Activated T-helper 1 cell treated with anti-CD3 and anti-CD28 coated beads, Interleukin-12 subunit alpha, Interleukin-12 subunit beta, Interleukin-2, Interleukin-4 antibody, amounts not matched to agents 30 ng/mL and 10 ng/mL and 1 ng/mL, durations not matched to agents 14 hours and 24 hours and 36 hours (primary cell): ENCODE measurements at regions of chr3 and their contacts with region 1.

Region 1: DNA sequence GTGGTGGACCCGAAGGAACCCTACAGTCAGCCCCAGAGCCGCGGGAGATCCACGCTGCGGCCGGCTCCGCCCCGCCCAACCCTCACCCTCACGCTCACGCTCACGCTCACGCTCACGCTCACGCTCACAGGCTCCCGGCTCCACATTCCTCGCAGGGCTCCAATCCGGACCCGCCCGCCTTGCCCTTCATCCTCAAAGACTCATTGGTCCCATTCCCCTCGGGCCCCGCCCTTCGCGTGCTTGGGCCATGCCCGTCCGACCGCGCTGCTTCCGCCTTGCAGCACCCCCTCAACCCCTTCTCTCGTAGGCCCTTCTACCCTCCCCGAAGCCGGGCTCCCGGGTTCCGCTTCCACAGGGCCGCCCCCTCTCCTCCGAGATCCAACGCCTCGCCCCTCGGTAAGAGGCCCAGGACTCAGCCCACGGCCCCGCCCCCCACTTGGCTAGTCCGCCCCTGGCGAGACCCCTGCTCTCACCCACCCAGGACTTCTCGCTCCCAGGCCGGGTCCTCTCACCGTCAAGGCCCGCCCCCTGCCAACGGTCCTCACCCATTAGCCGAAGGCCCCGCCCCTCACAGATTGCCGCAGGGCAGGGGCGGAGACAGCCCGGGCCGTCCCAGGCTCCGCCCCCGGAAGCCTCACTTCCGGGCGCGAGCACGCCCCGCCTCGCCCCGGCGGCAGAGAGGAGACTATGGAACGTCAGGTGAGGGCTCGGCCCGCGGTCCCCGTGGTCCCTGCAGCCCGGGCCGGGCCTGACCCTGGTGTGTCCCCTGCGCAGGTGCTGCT is at the start of gene APEH:
- DNase-seq: peak; percentile 96
- H3K4me3 Mint-ChIP-seq: peak within 1 kb of the TSS; percentile 87
- H3K27ac Mint-ChIP-seq: peak within 1 kb of the TSS; percentile 96
- H3K4me1 Mint-ChIP-seq: peaks cover 19% of the 10 kb centered on the region
- H3K27me3 Mint-ChIP-seq: no peaks in the 10 kb centered on the region
- total RNA-seq, gene APEH: 113 and 115 TPM in 2 replicates

Region 2: GRCh38 chr3:49469936-49470713 is 203.8 kb before region 1 on chr3 and contains the start of gene DAG1:
- intact Hi-C with region 1: loop called (anchors 1 kb)
- DNase-seq: peak; percentile 96
- H3K4me3 Mint-ChIP-seq: peak within 1 kb of the TSS; percentile 92
- H3K27ac Mint-ChIP-seq: peak within 1 kb of the TSS; percentile 88
- H3K4me1 Mint-ChIP-seq: peaks cover 23% of the 10 kb centered on the region
- H3K27me3 Mint-ChIP-seq: no peaks in the 10 kb centered on the region
- total RNA-seq, gene DAG1: 20.5 and 23.7 TPM in 2 replicates

Region 3: DNA sequence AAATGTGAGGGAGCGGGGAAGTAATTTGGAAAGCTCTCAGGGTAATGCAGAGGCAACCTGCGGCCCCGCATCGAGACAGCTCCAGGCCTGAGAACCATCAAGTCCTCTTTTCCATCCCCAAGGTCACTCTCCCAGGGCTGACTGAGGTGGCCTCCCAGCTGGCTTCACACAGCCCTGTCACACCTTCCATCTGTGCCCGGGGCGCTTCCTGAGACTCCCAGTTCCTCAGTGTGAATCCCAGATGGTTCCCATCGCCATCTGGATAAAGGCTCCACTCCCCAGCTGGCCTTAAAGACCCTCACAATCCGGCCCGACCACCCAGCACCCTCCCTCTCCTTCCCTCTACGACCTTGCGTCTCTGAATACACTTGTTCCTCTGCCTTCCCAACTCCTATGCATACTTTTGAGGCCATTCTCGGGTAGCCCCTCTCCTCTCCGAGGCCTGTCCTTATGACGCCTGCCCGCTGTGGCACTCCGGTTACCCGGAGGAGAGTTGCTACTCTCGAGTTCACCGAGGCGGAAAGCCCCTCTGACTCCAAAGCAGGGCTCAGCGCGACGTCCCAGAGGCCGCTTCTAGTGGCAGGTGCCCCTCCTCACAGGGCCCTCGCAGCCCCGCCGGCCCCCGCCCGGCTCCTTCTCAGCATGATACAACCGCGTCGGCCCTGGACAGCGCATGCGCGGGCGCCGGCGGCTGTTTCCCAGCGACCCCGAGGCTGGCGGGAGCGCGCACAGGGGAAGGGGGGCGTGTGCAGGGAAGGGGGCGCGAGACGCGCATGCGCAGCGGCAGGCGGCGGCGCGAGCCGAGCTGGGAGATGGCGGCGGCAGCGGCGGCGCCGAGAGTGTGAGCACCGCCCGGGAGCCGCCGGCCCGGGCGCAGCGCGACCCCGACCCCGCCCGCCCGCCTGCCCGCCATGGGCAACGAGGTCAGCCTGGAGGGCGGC is 119.9 kb before region 1 on chr3 and contains the start of gene BSN:
- intact Hi-C with region 1: loop called (anchors 1 kb)
- DNase-seq: peak; percentile 82
- H3K4me3 Mint-ChIP-seq: peak within 1 kb of the TSS; percentile 89
- H3K27ac Mint-ChIP-seq: peak within 1 kb of the TSS; percentile 63
- H3K4me1 Mint-ChIP-seq: peaks cover 20% of the 10 kb centered on the region
- H3K27me3 Mint-ChIP-seq: peaks cover 54% of the 10 kb centered on the region
- total RNA-seq, gene BSN: 0.13 and 0.34 TPM in 2 replicates

Region 4: GRCh38 chr3:49689046-49689907 is 15.4 kb after region 1 on chr3 and contains the starts of genes MST1 and RNF123:
- intact Hi-C with region 1: loop called (anchors 1 kb)
- DNase-seq: peak; percentile 91
- H3K4me3 Mint-ChIP-seq: peak within 1 kb of the TSS; percentile 97
- H3K27ac Mint-ChIP-seq: peak within 1 kb of the TSS; percentile 91
- H3K4me1 Mint-ChIP-seq: peaks cover 21% of the 10 kb centered on the region
- H3K27me3 Mint-ChIP-seq: peaks cover 2% of the 10 kb centered on the region
- total RNA-seq, gene MST1: 6.5 and 8.2 TPM in 2 replicates
- total RNA-seq, gene RNF123: 53.8 and 54.3 TPM in 2 replicates

Region 5: DNA sequence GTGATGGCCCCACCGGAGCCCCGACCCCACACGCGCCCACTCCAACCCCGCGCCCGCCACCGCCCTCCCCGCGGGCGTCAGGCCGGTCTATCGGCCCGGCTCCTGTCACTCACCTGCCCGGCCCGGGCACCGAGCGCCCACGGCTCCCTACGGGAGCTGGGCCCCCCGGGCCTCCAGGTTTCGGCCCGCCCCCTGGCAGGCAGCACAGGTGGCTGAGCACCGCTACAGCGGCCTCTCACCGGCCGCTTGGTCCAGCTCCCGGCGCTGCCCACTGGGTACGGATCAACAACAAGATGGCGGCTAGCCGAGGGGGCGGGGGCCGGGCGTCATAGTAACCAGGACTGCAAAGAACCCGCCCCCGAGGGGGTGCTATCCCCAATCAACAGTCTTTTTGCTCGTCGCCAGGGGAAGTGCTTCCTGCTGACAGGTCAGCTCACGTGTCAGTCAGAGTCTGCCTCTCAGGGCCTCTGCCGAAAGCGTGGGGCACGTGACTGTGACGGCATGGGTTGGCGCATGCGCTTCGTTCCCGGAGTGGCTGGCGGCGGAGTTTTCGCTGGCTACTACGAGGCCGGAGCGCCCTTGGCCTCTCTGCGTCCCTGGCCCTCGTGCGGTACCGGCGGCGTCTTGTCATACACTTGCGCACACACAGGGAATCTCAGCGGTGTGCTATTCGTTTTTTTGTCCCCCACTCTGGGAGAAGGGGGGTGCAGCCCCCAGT is 112.5 kb after region 1 on chr3 and contains the start of gene IP6K1:
- intact Hi-C with region 1: loop called (anchors 1 kb)
- DNase-seq: peak; percentile 100
- H3K4me3 Mint-ChIP-seq: peak within 1 kb of the TSS; percentile 92
- H3K27ac Mint-ChIP-seq: peak within 1 kb of the TSS; percentile 94
- H3K4me1 Mint-ChIP-seq: peaks cover 26% of the 10 kb centered on the region
- H3K27me3 Mint-ChIP-seq: peaks cover 8% of the 10 kb centered on the region
- total RNA-seq, gene IP6K1: 49.3 and 52.4 TPM in 2 replicates

Region 6: DNA sequence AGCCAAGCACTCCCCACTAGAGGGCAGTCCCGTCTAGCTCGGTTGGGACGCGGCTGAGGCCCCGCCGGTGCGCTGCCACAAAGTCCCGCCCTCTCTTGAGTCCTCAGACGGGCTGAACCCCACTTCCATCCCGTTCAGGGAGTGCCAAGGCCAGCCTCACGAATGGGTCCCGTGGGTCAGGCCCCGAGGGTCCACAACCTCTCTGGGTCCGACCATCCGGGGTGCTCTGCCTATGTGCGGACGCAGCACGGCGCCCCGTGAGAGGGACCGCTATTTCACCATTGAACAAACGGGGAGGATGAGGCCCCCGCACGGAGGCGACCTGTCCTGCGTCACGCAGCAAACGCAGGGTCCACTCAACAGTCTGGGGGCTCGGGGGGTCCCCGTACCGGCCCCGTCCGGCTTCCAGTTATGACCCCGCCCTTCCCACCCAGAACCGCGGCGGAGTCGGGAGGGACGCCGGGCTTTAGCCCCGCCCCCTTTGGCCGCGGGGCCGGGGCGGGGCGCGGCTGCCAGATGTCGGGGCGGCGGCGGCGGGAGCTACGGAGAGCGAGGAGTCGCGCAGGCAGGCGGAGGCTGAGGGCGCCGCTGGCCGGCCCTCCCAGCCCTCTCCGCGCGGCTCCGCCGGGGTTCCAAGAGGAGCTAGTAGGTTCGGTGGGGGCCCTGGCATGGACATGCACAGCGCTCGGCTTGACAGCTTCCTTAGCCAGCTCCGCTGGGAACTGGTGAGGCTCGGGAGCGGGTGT is 129.0 kb after region 1 on chr3 and contains the start of gene INKA1:
- intact Hi-C with region 1: no loop called
- DNase-seq: peak; percentile 82
- H3K4me3 Mint-ChIP-seq: peak within 1 kb of the TSS; percentile 84
- H3K27ac Mint-ChIP-seq: peak within 1 kb of the TSS; percentile 70
- H3K4me1 Mint-ChIP-seq: peaks cover 23% of the 10 kb centered on the region
- H3K27me3 Mint-ChIP-seq: peaks cover 10% of the 10 kb centered on the region
- total RNA-seq, gene INKA1: 1.3 and 2.7 TPM in 2 replicates

Region 7: GRCh38 chr3:50235716-50236496 is 562.0 kb after region 1 on chr3 and contains the start of gene GNAI2:
- intact Hi-C with region 1: loop called (anchors 5 kb)
- DNase-seq: peak; percentile 99
- H3K4me3 Mint-ChIP-seq: peak within 1 kb of the TSS; percentile 99
- H3K27ac Mint-ChIP-seq: peak within 1 kb of the TSS; percentile 94
- H3K4me1 Mint-ChIP-seq: peaks cover 32% of the 10 kb centered on the region
- H3K27me3 Mint-ChIP-seq: no peaks in the 10 kb centered on the region
- total RNA-seq, gene GNAI2: 237 and 238 TPM in 2 replicates